ENCODE measurements at regions of chr21 and their contacts with region 1.

Region 1: DNA sequence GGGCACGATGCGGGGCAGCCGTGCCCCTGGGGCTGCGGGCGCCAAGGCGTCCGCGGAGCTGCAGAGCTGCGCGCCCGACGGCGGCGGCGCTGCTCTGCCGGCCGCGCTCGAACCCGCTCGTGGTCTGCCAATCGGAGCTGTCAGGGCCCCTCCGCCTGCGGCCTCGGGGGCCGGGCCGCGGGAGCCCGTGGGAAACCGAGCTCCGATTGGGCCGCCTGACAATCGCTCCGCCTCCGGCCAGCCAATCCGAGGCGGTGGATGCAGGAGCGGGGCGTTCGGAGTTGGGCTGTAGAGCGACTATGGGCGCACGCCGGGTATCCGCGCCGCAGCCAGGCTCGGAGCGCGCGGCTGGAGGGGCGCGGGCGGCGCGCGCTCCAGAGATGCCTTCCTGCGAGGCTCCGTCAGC is 100.5 kb upstream of the SOD1 start:
- DNase-seq: peak; percentile 94
- H3K4me3 ChIP-seq: peak overlapping the region; percentile 68
- H3K4me3 Mint-ChIP-seq: peak overlapping the region; percentile 77
- H3K27ac Mint-ChIP-seq: peak overlapping the region; percentile 58
- H3K4me1 ChIP-seq: peaks cover 9% of the 10 kb centered on the region; the same call in 1 of the 2 replicates
- H3K4me1 Mint-ChIP-seq: no peaks in the 10 kb centered on the region
- H3K27me3 ChIP-seq: no peaks in the 10 kb centered on the region; the same call in 1 of the 2 replicates
- H3K27me3 Mint-ChIP-seq: peaks cover 5% of the 10 kb centered on the region
- CTCF ChIP-seq: peak in 1 of 2 experiments; percentile 16

Region 2: DNA sequence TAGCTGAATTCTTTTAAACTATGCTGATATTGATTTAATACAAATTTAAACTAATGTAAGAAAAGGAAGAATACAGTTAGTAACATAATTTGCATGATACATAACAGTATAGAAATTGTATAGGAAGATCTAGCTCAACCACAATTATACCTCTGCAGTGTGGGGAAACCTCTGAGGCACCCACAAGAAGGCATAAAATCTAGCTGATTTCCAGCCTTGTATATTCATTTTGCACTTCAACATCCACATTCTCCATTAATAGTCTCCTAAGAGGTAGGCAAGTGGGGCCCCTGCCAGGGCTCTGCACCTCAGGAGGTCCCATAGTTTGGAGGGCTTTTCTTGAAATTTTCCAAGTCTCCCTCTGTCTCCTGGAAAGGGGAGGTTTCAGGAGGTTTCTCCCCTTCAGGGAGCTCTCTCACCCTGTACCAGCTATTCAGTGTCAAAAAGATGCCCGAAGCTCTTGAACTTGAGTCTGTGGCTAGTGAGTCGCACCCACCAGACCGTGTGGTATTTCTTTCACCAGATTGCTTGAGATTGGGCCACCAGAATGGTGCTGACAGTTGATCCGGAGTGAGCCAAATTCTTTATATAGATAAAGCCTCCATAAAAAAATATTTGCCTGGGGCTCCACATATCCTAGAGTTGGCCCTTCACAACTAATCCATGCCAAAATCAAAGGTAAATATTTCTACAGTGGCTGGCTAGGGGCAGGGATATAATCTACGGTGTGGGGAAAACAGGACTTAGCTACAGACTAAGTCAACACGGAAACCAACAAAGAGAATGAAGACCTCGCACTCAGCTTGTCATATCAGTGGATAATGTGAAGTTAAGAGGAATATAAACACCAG is 323.1 kb before region 1 on chr21:
- CTCF ChIA-PET with region 1: no interaction called
- POLR2A ChIA-PET with region 1: interaction called, 13 read pairs
- intact Hi-C with region 1: no loop called
- DNase-seq: peak in 1 of 2 experiments; percentile 23
- H3K4me3 ChIP-seq: no peak overlapping the region
- H3K4me3 Mint-ChIP-seq: no peak overlapping the region
- H3K27ac Mint-ChIP-seq: no peak overlapping the region
- H3K4me1 ChIP-seq: no peaks in the 10 kb centered on the region
- H3K4me1 Mint-ChIP-seq: peaks cover 9% of the 10 kb centered on the region
- H3K27me3 ChIP-seq: no peaks in the 10 kb centered on the region
- H3K27me3 Mint-ChIP-seq: no peaks in the 10 kb centered on the region
- CTCF ChIP-seq: no peak

Region 3: DNA sequence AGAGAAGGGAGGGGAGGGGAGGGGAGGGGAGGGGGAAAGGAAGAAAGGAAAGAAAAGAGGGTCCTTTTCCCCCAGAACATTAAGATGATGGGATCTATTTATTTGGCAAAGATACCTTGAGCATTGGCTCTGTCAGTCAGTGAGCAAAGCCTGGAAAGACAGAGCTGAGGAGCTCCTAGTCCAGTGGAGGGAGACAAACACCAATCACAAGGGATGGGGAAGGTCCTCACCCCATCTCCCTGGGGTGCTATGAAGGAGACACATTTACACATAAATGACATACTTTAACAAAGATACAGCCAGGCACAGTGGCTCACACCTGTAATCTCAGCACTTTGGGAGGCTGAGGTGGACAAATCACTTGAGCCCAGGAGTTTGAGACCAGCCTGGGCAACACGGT is 60.0 kb before region 1 on chr21:
- CTCF ChIA-PET with region 1: interaction called, 6 read pairs
- POLR2A ChIA-PET with region 1: interaction called, 3 read pairs
- intact Hi-C with region 1: loop called (anchors 5 kb)
- DNase-seq: peak in 1 of 2 experiments; percentile 38
- H3K4me3 ChIP-seq: no peak overlapping the region
- H3K4me3 Mint-ChIP-seq: no peak overlapping the region
- H3K27ac Mint-ChIP-seq: no peak overlapping the region
- H3K4me1 ChIP-seq: peaks cover 28% of the 10 kb centered on the region
- H3K4me1 Mint-ChIP-seq: peaks cover 13% of the 10 kb centered on the region
- H3K27me3 ChIP-seq: no peaks in the 10 kb centered on the region
- H3K27me3 Mint-ChIP-seq: no peaks in the 10 kb centered on the region
- CTCF ChIP-seq: peak in 1 of 2 experiments; percentile 5

Measured in Caco-2 (cell line).